Posterior cingulate gyrus (tissue), 11 donors: ENCODE measurements at regions of chr17 and their contacts with region 1.

Region 1: GRCh38 chr17:31085563-31085962 is 9.2 kb upstream of the NF1 start:
- DNase-seq: no peak

Region 2: DNA sequence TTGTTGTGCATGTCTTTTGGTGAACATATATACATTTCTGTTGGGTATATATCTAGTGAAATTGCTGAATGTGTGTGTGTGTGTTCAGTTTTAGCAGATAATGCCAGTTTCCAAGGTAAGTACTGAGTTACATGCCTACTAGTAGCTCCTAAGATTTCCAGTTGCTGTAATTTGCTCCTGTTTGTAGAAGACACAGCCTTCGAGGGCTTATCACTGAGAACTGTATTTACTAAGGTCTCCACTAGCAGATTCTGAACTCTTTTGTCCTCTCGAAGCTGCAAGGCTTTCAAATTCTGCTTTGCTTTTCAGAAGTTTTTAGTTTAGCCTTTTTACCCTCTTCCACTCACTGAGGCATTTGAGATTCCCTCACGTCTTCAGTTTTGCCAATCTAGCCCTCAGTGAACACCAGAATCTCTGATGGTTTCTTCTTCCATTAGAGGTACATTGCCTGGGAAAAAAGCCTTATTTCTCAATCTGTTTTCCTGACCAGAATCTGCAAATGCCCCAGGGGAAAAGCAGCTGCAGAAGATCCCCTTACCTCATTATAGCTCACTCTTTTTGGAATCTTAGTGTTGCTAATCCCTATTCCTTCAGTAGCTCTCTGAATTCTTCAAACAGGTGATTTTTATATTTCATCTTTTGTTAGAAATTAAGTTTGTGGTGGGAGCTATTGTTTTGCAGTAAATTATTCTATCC is 62.1 kb after region 1 on chr17:
- intact Hi-C with region 1: loop called (anchors 10 kb)
- DNase-seq: no peak